Activated B cell treated with CpG ODN at 0.5 μM for 24 hours (primary cell): ENCODE measurements at regions of chr2 and their contacts with region 1.

Region 1: DNA sequence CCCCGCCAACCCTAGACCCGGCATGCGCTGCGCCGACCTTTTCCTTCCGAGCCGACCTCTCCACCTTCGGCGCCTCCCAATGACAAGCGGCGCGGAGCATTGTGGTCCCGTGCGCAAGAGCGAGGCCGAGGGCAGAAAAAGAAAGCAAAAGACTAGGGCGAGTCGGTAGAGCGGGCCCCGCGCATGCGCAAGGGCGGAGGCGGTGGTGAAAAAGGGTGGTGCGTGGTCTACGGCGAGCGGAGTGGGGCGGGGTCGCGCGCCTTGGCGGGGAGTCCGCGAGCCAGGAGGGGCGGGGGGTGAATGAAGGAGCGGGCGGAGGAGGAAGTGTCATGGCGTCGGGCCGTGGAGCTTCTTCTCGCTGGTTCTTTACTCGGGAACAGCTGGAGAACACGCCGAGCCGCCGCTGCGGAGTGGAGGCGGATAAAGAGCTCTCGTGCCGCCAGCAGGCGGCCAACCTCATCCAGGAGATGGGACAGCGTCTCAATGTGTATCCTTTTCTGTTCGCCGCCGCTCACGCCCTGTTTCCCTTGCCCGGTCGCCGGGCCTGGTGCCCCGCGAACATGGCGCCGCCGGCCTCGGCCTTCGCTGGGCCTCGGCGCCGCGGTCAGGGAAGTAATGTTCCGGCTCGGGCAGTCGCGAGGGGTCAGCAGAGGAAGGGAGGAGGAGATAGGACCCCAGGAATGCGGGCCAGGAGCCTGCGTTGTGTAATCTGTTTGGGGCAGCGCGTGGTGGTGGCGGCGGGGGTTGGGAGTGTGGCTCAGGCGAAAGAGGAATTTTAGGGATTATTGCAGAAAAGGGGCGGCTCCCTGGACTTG is at the start of gene CCNT2:
- DNase-seq: peak; percentile 100
- ATAC-seq: peak; percentile 83
- H3K4me3 Mint-ChIP-seq: peak within 1 kb of the TSS; percentile 98
- H3K27ac Mint-ChIP-seq: peak within 1 kb of the TSS; percentile 99
- H3K4me1 Mint-ChIP-seq: peaks cover 54% of the 10 kb centered on the region
- H3K27me3 Mint-ChIP-seq: peaks cover 3% of the 10 kb centered on the region
- CTCF ChIP-seq: no peak
- total RNA-seq, gene CCNT2: 62.9 and 73.4 TPM in 2 replicates

Region 2: DNA sequence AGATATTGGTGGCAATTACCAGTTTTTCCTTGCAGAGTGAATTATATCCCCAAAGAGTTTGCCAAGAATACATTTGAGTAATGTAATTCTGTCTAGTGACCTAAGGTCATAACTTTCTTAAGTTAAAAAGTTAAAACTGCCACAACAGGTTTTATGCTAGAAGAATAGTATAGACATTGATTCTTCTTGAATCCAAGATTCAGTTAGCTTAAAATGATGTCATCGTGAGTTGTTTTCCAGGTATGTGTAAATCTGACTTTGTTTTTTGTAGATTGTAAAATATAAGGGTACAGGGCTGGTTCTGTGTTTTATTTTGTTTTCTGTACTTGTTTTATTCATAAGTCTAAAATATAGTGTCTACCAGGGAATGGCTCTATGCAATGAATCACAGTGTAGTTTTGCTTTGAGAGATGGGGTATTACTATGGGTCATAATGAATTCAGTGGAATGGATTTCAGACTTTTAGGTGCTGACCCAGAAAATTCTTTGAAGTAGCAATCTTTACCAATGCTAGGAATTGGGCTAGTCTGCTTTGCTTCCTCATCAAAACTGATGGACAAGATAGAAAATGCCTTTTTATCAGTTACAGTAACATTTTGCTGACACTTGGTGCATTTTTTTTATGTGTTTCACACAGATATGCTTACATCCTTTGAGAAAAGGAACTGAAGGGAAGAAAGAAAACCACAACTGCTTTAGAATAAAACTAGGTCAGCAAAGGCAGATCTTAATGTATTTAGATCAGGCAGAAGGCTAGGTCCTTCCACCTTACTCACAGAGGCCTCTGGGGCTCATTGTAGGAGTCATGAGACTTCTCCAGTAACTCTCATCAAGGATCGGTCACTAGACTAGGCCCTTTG is 685.6 kb before region 1 on chr2:
- CTCF ChIA-PET with region 1: no interaction called
- POLR2A ChIA-PET with region 1: no interaction called
- intact Hi-C with region 1: loop called (anchors 5 kb)
- DNase-seq: no peak
- ATAC-seq: peak; percentile 35
- H3K4me3 Mint-ChIP-seq: peak overlapping the region; percentile 52
- H3K27ac Mint-ChIP-seq: peak overlapping the region; percentile 86
- H3K4me1 Mint-ChIP-seq: peaks cover 90% of the 10 kb centered on the region
- H3K27me3 Mint-ChIP-seq: no peaks in the 10 kb centered on the region
- CTCF ChIP-seq: no peak

Region 3: GRCh38 chr2:134275058-134275862 is 643.5 kb before region 1 on chr2:
- CTCF ChIA-PET with region 1: no interaction called
- POLR2A ChIA-PET with region 1: no interaction called
- intact Hi-C with region 1: loop called (anchors 2 kb)
- DNase-seq: peak; percentile 54
- ATAC-seq: peak; percentile 85
- H3K4me3 Mint-ChIP-seq: peak overlapping the region; percentile 77
- H3K27ac Mint-ChIP-seq: peak overlapping the region; percentile 94
- H3K4me1 Mint-ChIP-seq: peaks cover 98% of the 10 kb centered on the region
- H3K27me3 Mint-ChIP-seq: no peaks in the 10 kb centered on the region
- CTCF ChIP-seq: no peak

Region 4: DNA sequence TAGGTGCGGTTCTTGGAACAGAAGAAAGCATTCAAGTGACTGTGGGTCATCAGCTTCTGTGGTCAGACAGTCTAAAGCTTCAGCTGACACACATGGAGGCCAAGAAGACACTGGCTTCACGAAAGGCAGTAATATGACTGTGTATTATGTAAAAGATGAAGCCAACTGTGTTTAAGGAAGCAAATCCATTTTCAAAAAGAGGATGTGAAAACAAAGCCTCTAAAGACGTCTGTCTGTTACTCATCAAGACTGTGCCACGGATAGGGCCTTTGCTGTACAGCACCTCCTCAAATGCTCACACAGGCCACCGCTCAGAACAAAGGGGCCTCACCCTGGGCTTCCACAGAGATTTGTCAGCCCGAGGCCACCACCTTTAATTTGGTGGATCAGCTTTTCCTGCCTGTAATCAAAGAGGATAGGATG is 178.8 kb before region 1 on chr2:
- CTCF ChIA-PET with region 1: no interaction called
- POLR2A ChIA-PET with region 1: interaction called, 20 read pairs
- intact Hi-C with region 1: loop called (anchors 1 kb)
- DNase-seq: peak; percentile 62
- ATAC-seq: peak; percentile 88
- H3K4me3 Mint-ChIP-seq: peak overlapping the region; percentile 49
- H3K27ac Mint-ChIP-seq: peak overlapping the region; percentile 97
- H3K4me1 Mint-ChIP-seq: peaks cover 71% of the 10 kb centered on the region
- H3K27me3 Mint-ChIP-seq: no peaks in the 10 kb centered on the region
- CTCF ChIP-seq: no peak

Region 5: GRCh38 chr2:135052042-135052876 is 133.5 kb after region 1 on chr2 and contains the start of gene RAB3GAP1:
- CTCF ChIA-PET with region 1: no interaction called
- POLR2A ChIA-PET with region 1: interaction called, 13 read pairs
- intact Hi-C with region 1: loop called (anchors 1 kb)
- DNase-seq: peak; percentile 72
- ATAC-seq: peak; percentile 89
- H3K4me3 Mint-ChIP-seq: peak within 1 kb of the TSS; percentile 99
- H3K27ac Mint-ChIP-seq: peak within 1 kb of the TSS; percentile 99
- H3K4me1 Mint-ChIP-seq: peaks cover 40% of the 10 kb centered on the region
- H3K27me3 Mint-ChIP-seq: no peaks in the 10 kb centered on the region
- CTCF ChIP-seq: no peak
- total RNA-seq, gene RAB3GAP1: 46.3 and 51.0 TPM in 2 replicates

Region 6: DNA sequence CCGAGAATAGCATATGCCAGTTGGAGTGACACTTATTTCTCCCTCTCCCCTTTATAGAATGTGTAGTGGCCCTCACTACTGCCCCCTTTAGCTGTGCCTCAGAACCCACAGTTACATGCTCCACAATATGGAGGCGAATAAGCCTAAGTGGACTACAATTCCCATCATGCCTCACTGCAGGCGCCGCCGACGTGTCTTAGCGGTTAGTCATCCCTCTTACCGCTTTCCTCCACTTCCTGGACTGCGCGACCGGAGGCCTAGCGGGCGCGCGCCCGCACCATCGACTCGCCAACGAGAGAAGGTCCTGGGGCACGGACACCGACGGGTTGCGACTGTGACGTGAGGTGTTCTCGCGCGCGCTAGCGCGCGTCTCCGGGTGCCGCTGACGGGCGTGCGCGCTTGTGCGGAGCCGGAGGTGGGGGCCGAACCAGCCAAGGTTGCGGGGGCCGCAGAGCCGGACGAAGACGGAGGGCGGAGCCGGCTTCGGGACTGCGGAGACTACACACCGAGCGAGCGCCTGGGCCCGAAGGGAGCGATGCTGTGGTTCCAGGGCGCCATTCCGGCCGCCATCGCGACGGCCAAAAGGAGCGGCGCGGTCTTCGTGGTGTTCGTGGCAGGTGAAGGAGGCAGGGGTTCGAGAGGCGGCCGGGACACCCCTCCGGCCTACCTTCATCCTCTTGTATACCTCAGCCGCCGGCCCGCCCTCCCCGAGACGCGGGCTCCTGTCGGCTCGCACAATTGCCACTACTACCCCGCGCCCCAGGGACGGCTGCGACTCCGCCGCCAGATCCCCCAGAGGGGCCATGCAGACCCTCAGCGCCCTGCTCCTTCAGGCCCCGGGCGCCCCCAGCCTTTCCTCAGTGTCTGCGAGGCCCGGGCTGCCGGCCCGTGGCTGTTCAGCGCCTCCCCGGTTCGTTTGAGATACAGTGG is 822.9 kb after region 1 on chr2 and contains the start of gene UBXN4:
- CTCF ChIA-PET with region 1: no interaction called
- POLR2A ChIA-PET with region 1: interaction called, 5 read pairs
- intact Hi-C with region 1: loop called (anchors 1 kb)
- DNase-seq: peak; percentile 81
- ATAC-seq: peak; percentile 87
- H3K4me3 Mint-ChIP-seq: peak within 1 kb of the TSS; percentile 99
- H3K27ac Mint-ChIP-seq: peak within 1 kb of the TSS; percentile 99
- H3K4me1 Mint-ChIP-seq: peaks cover 40% of the 10 kb centered on the region
- H3K27me3 Mint-ChIP-seq: no peaks in the 10 kb centered on the region
- CTCF ChIP-seq: no peak
- total RNA-seq, gene UBXN4: 87.8 and 107 TPM in 2 replicates